Heart left ventricle (tissue), 16 donors: ENCODE measurements at regions of chr6 and their contacts with region 1.

Region 1: GRCh38 chr6:157379656-157380454 is 1.1 kb upstream of the ZDHHC14 start:
- DNase-seq: peak; percentile 91 to 94 (median 94)
- ATAC-seq: peak; percentile 92 to 94 (median 92)
- H3K4me3 ChIP-seq: peak overlapping the region; percentile 81 to 100 (median 92)
- H3K27ac ChIP-seq: peak overlapping the region; percentile 83 to 99 (median 96)
- H3K4me1 ChIP-seq: peaks cover 0 to 31% (median 14%) of the 10 kb centered on the region in 12 donors
- H3K27me3 ChIP-seq: no peaks in the 10 kb centered on the region
- CTCF ChIP-seq: no peak
- POLR2A ChIP-seq: peak in 1 of 2 donors; percentile 28

Region 2: DNA sequence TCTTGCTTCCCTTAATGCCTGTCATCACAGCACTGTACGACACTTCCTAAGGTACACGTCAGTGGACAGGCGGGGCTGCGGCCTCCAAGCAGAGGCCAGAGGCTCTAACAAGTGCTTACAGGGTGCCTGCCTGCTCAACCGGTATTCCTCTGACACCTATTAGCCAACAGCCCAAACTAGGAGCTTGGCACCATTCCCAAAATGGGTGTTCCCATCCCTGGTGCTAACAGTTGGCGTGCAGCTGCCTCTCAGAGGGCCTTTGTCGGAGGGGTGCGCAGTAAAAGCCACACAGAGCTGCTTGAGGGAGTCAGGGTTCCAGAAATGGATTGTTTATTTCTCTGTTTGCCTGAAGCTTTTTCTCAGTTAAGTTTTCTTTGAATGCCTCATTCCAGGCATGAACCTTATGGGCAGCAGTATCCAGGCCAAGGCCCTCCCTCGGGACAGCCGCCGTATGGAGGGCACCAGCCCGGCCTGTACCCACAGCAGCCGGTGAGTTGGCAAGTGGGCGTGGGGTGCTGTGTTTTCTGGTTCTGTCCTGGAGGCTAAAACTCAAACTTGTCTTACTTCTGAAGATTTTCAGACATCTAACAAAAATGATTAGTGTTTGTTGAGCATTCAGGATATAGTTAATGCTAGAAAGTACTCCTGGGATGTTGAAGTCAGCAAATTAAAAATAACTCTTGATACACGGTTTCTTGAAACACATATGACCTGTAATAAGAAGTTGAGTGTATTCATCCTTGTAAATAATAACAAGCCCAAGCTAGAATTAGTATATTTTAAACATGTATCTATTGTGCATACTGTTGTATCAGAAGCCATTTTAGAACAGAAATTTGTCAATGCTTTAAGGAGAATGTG is 181.2 kb before region 1 on chr6:
- intact Hi-C with region 1: no loop called
- DNase-seq: peak in 4 of 5 donors; percentile 72 to 86 (median 77)
- ATAC-seq: peak; percentile 76 to 94 (median 92)
- H3K4me3 ChIP-seq: peak overlapping the region in 4 of 12 donors; percentile 5 to 33 (median 10)
- H3K27ac ChIP-seq: peak overlapping the region in 10 of 12 donors; percentile 3 to 78 (median 54)
- H3K4me1 ChIP-seq: peaks cover 0 to 16% (median 8%) of the 10 kb centered on the region in 12 donors
- H3K27me3 ChIP-seq: no peaks in the 10 kb centered on the region
- CTCF ChIP-seq: no peak
- POLR2A ChIP-seq: no peak

Region 3: GRCh38 chr6:157314705-157315321 is 65.0 kb before region 1 on chr6:
- intact Hi-C with region 1: loop called in 2 of 10 experiments (anchors 5 kb)
- DNase-seq: no peak
- ATAC-seq: peak; percentile 50 to 77 (median 72)
- H3K4me3 ChIP-seq: no peak overlapping the region
- H3K27ac ChIP-seq: peak overlapping the region in 2 of 12 donors; percentile 6 to 27
- H3K4me1 ChIP-seq: peaks cover 0 to 31% (median 9%) of the 10 kb centered on the region in 12 donors
- H3K27me3 ChIP-seq: no peaks in the 10 kb centered on the region
- CTCF ChIP-seq: peak; percentile 69 to 92 (median 86)
- POLR2A ChIP-seq: no peak

Region 4: GRCh38 chr6:157428427-157429202 is 48.8 kb after region 1 on chr6:
- intact Hi-C with region 1: loop called in 5 of 10 experiments (anchors 5 kb)
- DNase-seq: no peak
- ATAC-seq: peak in 1 of 4 donors; percentile 26
- H3K4me3 ChIP-seq: peak overlapping the region in 4 of 12 donors; percentile 1 to 22 (median 20)
- H3K27ac ChIP-seq: peak overlapping the region; percentile 48 to 90 (median 77)
- H3K4me1 ChIP-seq: peaks cover 3 to 80% (median 35%) of the 10 kb centered on the region in 12 donors
- H3K27me3 ChIP-seq: no peaks in the 10 kb centered on the region
- CTCF ChIP-seq: no peak
- POLR2A ChIP-seq: no peak

Region 5: DNA sequence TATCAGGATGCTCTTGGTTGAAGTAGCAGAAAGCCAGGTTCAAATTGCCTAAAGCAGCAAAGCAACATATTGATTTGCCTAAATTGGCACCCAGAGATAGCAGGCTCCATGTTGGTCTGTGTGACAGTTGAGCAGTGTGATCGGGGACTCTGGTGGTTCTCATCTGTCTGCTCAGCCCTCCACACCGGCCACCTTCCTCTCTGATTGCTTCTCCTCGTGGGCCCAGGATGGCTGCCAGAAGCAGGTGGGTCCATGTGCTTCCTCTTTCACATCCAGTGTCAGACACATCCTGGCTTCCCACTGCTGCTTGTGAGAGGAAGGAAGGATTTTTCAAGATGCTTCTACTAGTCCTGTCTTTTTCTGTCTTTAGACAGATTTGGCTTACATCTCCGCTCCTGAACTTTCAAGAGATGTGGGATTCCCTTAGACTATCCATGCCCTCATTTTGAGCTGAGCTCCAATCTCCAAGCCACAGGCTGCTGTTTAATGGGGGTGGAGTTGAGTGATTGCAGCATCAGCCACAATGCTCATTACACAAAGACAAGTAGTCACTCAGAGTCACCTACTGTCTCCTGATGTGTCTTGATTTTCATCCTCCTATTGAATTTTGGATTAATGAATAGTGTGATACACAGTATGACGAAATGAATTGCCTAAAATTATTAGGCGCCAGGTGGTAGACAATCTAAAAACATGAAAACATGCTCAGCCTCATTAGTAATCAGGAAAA is 123.3 kb after region 1 on chr6:
- intact Hi-C with region 1: loop called in 1 of 10 experiments (anchors 10 kb)
- DNase-seq: no peak
- ATAC-seq: no peak
- H3K4me3 ChIP-seq: no peak overlapping the region
- H3K27ac ChIP-seq: no peak overlapping the region
- H3K4me1 ChIP-seq: peaks cover 0 to 17% (median 11%) of the 10 kb centered on the region in 12 donors
- H3K27me3 ChIP-seq: no peaks in the 10 kb centered on the region
- CTCF ChIP-seq: no peak
- POLR2A ChIP-seq: no peak

Region 6: DNA sequence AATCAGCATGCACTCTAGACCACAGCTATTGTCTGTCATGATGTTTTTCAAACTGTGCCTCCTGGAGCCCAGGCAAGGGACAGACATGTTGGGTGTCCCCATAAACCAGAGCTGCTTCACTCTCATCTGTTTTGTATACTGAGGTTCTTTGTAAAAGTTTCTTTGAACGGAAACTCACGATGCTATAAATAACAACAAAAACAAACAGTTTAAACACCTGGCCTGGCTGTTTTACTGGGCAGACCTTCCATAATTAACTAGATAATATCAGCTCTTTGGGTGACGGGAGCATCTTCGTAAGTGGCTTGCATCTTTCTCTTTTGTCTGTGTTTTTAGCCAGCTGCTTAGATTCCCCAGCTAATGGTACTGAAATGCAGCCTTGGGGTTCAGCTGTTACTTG is 191.4 kb after region 1 on chr6:
- intact Hi-C with region 1: loop called in 3 of 10 experiments (anchors 10 kb)
- DNase-seq: no peak
- ATAC-seq: no peak
- H3K4me3 ChIP-seq: no peak overlapping the region
- H3K27ac ChIP-seq: no peak overlapping the region
- H3K4me1 ChIP-seq: peaks cover 0 to 10% (median 0%) of the 10 kb centered on the region in 12 donors
- H3K27me3 ChIP-seq: no peaks in the 10 kb centered on the region
- CTCF ChIP-seq: no peak
- POLR2A ChIP-seq: no peak

Region 7: DNA sequence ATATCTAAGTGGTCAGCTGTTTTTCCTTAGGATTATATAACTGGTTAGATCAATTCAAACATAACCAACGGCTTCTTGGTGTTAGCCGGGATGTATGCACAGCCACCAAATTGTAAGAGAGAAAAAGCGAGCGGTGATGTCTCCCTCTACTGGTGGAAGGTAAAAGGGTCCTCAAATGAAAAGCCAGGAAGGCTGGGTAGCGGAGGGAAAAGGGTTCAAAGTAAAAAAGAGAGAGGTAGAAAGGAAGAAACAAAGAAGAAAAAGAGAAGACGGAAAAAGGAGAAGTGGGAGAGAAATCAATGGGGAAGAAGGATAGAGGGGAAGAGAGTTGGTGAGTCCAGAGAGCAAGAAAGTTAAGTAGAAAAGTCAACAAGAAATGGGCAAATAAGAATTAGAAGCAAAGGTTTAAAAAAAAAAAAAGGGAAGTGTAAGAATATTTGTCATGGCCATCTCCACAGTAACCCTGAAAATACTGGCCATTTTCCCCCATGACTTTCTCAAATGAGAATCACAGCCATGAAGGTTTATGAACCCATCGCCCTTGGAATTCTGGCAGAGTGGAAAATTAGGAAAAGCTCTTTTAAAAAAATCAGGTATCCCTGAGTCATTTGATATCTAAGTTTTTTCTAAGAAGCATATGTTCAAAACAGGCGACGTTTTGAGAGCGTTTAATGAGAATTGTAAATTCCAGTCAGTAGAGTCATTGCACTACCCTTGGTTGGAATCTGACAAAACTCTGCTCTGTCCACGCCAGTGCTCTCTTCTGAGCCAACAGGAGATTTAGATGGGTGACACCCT is 287.6 kb after region 1 on chr6:
- intact Hi-C with region 1: loop called in 4 of 10 experiments (anchors 2 to 10 kb)
- DNase-seq: peak in 3 of 5 donors; percentile 39 to 48 (median 44)
- ATAC-seq: peak in 2 of 4 donors; percentile 41 to 56
- H3K4me3 ChIP-seq: no peak overlapping the region
- H3K27ac ChIP-seq: no peak overlapping the region
- H3K4me1 ChIP-seq: peaks cover 0 to 34% (median 18%) of the 10 kb centered on the region in 12 donors
- H3K27me3 ChIP-seq: no peaks in the 10 kb centered on the region
- CTCF ChIP-seq: peak; percentile 74 to 94 (median 87)
- POLR2A ChIP-seq: no peak